ENCODE measurements at regions of chr1 and their contacts with region 1.

Region 1: GRCh38 chr1:242530761-242531160 is 6.3 kb upstream of the PLD5 start:
- DNase-seq: peak; percentile 46
- H3K4me3 Mint-ChIP-seq: no peak overlapping the region
- H3K27ac Mint-ChIP-seq: peak overlapping the region; percentile 74
- H3K4me1 Mint-ChIP-seq: peaks cover 20% of the 10 kb centered on the region
- H3K27me3 Mint-ChIP-seq: no peaks in the 10 kb centered on the region
- CTCF ChIP-seq: no peak

Region 2: DNA sequence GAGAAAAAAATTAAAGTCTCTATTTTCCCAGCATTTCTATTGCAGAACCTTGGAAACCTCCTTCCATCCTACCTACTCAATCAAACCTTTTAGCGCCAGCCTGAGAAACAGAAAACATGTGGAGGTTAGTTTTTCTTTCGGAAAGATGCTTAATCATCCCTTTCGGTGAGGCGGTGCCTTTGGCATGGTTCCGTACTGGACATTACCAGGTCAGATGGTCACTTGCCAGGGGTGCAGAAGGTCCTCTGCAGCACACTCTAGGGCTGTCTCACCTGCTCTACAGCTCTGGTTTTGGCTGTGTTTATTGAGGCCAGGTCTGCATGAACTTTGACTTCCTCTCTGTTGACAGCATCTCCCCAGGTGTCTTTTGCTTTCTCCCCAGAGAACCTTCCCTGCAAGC is 127.8 kb before region 1 on chr1:
- CTCF ChIA-PET with region 1: no interaction called
- POLR2A ChIA-PET with region 1: no interaction called
- intact Hi-C with region 1: no loop called
- DNase-seq: no peak
- H3K4me3 Mint-ChIP-seq: no peak overlapping the region
- H3K27ac Mint-ChIP-seq: no peak overlapping the region
- H3K4me1 Mint-ChIP-seq: peaks cover 5% of the 10 kb centered on the region
- H3K27me3 Mint-ChIP-seq: no peaks in the 10 kb centered on the region
- CTCF ChIP-seq: no peak

Region 3: GRCh38 chr1:242629396-242629795 is 98.6 kb after region 1 on chr1:
- CTCF ChIA-PET with region 1: interaction called, 5 read pairs
- POLR2A ChIA-PET with region 1: no interaction called
- intact Hi-C with region 1: loop called (anchors 1 kb)
- DNase-seq: peak; percentile 85
- H3K4me3 Mint-ChIP-seq: no peak overlapping the region
- H3K27ac Mint-ChIP-seq: peak overlapping the region; percentile 77
- H3K4me1 Mint-ChIP-seq: peaks cover 14% of the 10 kb centered on the region
- H3K27me3 Mint-ChIP-seq: no peaks in the 10 kb centered on the region
- CTCF ChIP-seq: no peak

Measured in MCF 10A (cell line).